ENCODE measurements at regions of chr1 and their contacts with region 1.

Region 1: DNA sequence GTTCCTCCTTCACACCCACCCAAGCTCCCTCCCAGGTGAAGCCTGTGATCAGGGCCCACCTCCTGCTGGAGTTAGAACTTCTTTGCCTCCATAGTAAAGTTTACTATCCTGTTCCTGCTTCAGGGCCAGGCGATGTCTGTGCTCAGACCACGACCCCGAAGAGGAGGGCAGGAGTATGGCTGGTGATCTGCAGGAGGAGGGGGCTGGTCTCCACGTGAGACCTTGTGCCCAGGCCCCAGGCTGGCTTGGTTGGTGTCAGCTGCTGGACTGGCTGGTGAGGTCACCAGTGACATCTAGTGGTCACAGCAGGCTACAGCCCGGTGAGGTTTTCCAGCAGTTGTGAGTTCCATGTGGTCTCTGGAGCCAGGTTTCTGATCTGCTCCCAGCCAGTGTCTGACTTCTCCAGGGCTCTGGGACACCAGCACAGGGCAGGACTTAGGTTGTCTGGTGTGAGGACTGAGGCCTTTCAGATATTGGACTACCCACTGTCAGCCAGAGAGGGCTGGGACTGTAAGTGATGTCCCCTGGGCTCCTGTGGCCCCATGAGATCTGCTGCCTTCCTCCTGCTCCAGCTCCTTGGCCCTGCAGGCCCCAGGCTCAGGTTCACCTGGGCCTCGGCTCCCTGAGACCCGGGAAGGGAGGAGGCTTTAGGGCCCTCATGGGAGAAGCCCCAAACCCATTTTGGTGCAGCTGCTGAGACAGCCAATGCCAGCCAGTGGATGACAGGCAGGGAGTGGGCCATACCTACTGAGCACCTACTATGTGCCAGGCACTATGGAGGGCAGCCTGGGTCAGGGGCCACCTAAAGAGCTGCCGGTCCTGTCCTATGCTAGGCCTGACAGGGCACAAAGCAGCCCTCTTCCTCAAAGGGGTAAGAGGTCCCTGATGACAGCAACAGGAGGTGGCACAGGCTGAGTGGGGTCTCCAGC is 6.0 kb upstream of the UBL4B start:
- DNase-seq: peak; percentile 43
- H3K4me3 ChIP-seq: no peak overlapping the region
- H3K27ac ChIP-seq: no peak overlapping the region
- H3K27me3 ChIP-seq: peaks cover 40% of the 10 kb centered on the region
- CTCF ChIP-seq: peak; percentile 98

Region 2: GRCh38 chr1:109923131-109923945 is 182.9 kb before region 1 on chr1:
- CTCF ChIA-PET with region 1: no interaction called
- POLR2A ChIA-PET with region 1: no interaction called
- DNase-seq: no peak
- H3K4me3 ChIP-seq: no peak overlapping the region
- H3K27ac ChIP-seq: peak overlapping the region; percentile 11
- H3K27me3 ChIP-seq: no peaks in the 10 kb centered on the region
- CTCF ChIP-seq: peak; percentile 44

Region 3: GRCh38 chr1:110118636-110119615 is 12.6 kb after region 1 on chr1:
- CTCF ChIA-PET with region 1: interaction called, 37 read pairs
- POLR2A ChIA-PET with region 1: no interaction called
- DNase-seq: no peak
- H3K4me3 ChIP-seq: no peak overlapping the region
- H3K27ac ChIP-seq: no peak overlapping the region
- H3K27me3 ChIP-seq: peaks cover 23% of the 10 kb centered on the region
- CTCF ChIP-seq: no peak